ENCODE measurements at regions of chrX and their contacts with region 1.

Region 1: GRCh38 chrX:136747003-136747986 is 33.4 kb downstream of the ARHGEF6 start:
- DNase-seq: peak; percentile 57
- H3K4me3 Mint-ChIP-seq: peak overlapping the region; percentile 48
- H3K27ac Mint-ChIP-seq: peak overlapping the region; percentile 93
- H3K4me1 Mint-ChIP-seq: peaks cover 88% of the 10 kb centered on the region
- H3K27me3 Mint-ChIP-seq: no peaks in the 10 kb centered on the region

Region 2: GRCh38 chrX:136646602-136647239 is 100.6 kb before region 1 on chrX:
- CTCF ChIA-PET with region 1: no interaction called
- POLR2A ChIA-PET with region 1: no interaction called
- intact Hi-C with region 1: no loop called
- DNase-seq: peak; percentile 78
- H3K4me3 Mint-ChIP-seq: peak overlapping the region; percentile 93
- H3K27ac Mint-ChIP-seq: peak overlapping the region; percentile 99
- H3K4me1 Mint-ChIP-seq: peaks cover 53% of the 10 kb centered on the region
- H3K27me3 Mint-ChIP-seq: no peaks in the 10 kb centered on the region

Region 3: DNA sequence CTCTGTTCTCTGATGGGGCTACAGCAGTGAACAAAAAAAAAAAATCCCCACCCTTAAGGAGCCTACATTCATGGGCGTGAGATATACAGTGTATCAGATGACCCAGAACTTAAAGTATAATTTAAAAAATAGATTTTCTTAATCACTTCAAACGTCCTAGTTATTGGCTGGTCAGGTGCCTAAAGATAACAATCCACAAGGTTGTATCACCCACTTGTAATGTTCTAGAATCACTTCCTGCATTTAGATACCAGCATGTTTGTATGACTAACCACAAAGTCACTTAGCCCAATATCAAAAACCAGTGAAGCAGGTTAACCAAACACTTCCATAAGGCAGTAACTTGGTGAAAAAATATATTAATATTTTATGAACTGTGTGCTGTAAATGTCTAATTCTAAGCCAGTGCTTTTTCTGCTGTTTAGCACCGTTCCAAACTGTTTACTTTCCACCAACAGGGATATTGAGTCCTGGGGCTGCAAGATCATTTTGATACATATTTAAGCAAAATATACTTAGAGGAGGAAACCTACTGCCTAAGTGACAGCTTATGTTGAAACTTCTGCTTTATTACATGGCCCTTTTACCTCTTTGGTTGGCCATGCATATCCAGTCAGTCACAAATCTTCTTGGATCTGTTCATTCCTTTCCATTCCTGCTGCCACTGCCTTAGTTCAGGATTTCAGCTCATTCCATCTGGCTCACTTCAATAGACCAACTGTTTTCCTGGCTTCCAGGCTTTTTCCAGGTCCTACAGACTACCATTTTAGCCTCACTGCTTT is 56.1 kb before region 1 on chrX:
- CTCF ChIA-PET with region 1: no interaction called
- POLR2A ChIA-PET with region 1: no interaction called
- intact Hi-C with region 1: no loop called
- DNase-seq: no peak
- H3K4me3 Mint-ChIP-seq: peak overlapping the region; percentile 32
- H3K27ac Mint-ChIP-seq: peak overlapping the region; percentile 90
- H3K4me1 Mint-ChIP-seq: peaks cover 82% of the 10 kb centered on the region
- H3K27me3 Mint-ChIP-seq: no peaks in the 10 kb centered on the region

Region 4: GRCh38 chrX:136731207-136731782 is 16.0 kb before region 1 on chrX:
- CTCF ChIA-PET with region 1: no interaction called
- POLR2A ChIA-PET with region 1: interaction called, 3 read pairs
- intact Hi-C with region 1: loop called (anchors 2 kb)
- DNase-seq: peak; percentile 53
- H3K4me3 Mint-ChIP-seq: peak overlapping the region; percentile 6
- H3K27ac Mint-ChIP-seq: peak overlapping the region; percentile 56
- H3K4me1 Mint-ChIP-seq: peaks cover 57% of the 10 kb centered on the region
- H3K27me3 Mint-ChIP-seq: no peaks in the 10 kb centered on the region